A549 (cell line): ENCODE measurements at regions of chr11 and their contacts with region 1.

Region 1: GRCh38 chr11:1832211-1832919 is 2.4 kb upstream of the SYT8 start:
- DNase-seq: peak; percentile 44 to 69
- ATAC-seq: peak; percentile 41 to 83; a peak in 3 of 6 replicates
- H3K4me3 ChIP-seq: peak overlapping the region; percentile 27
- H3K27ac ChIP-seq: peak overlapping the region; percentile 73 to 89
- H3K4me1 ChIP-seq: peaks cover 66% of the 10 kb centered on the region
- CTCF ChIP-seq: peak; percentile 99
- EP300 ChIP-seq: no peak
- POLR2A ChIP-seq: no peak
- RAD21 ChIP-seq: peak; percentile 80 to 99

Region 2: GRCh38 chr11:1682225-1682905 is 150.0 kb before region 1 on chr11:
- CTCF ChIA-PET with region 1: interaction called, 28 read pairs
- POLR2A ChIA-PET with region 1: no interaction called
- DNase-seq: no peak
- ATAC-seq: no peak
- H3K4me3 ChIP-seq: no peak overlapping the region
- H3K27ac ChIP-seq: no peak overlapping the region
- H3K4me1 ChIP-seq: no peaks in the 10 kb centered on the region
- CTCF ChIP-seq: no peak
- EP300 ChIP-seq: no peak
- POLR2A ChIP-seq: no peak
- RAD21 ChIP-seq: no peak

Region 3: DNA sequence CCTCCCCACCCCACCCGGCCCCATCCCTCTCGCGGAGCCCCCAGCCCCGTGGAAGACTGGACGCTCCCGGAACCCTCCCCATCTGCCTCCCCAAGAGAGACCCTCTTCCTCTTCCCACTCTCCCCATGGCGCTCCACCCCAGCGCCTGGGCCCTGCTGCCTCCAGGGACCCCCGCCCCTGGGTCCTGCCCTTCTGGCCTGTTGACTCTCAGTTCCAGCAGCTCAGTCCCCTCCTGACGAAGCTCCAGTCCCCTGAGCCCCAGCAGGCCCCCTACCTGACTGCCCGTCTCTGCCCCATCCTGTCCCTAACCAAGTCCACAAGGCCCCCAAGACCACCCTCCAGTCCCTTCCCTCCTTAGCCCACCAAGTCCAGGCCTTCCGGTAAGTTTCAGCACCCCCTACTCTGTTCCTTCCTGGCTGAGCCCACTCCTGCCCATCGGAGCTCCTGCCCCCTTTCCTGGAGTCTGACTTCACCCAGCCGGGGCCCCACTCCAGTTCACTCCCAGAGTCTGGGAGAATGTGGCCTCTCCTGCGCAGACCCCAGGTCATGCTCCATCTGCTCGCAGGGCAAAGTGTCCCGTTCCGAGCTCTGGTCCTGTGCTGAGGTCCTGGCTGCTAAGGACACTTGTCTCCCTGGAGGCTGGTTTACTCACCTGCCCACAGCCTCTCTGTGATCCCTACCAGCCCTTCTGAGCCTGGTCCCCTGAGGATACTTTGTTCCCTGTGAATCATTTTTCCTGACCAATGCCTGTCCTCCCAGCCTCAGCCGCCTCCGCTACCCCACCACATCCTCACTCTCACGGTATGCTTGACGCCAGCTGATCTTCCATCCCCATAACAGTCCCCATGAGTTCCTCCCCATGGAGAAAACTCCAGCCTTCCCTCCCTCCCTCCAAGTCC is 82.7 kb before region 1 on chr11:
- CTCF ChIA-PET with region 1: interaction called, 12 read pairs
- POLR2A ChIA-PET with region 1: no interaction called
- DNase-seq: peak in 1 of 2 experiments; percentile 42
- ATAC-seq: peak; percentile 46 to 51
- H3K4me3 ChIP-seq: peak overlapping the region; percentile 34; the same call in 2 of the 3 replicates
- H3K27ac ChIP-seq: peak overlapping the region in 1 of 2 experiments; percentile 80; a peak in 3 of 6 replicates
- H3K4me1 ChIP-seq: peaks cover 24% of the 10 kb centered on the region; the same call in 2 of the 3 replicates
- CTCF ChIP-seq: no peak
- EP300 ChIP-seq: no peak
- POLR2A ChIP-seq: no peak
- RAD21 ChIP-seq: no peak

Region 4: GRCh38 chr11:1782831-1783724 is 49.3 kb before region 1 on chr11:
- CTCF ChIA-PET with region 1: interaction called, 13 read pairs
- POLR2A ChIA-PET with region 1: no interaction called
- DNase-seq: peak in 1 of 2 experiments; percentile 31
- ATAC-seq: peak in 1 of 2 experiments; percentile 17; a peak in 2 of 6 replicates
- H3K4me3 ChIP-seq: no peak overlapping the region
- H3K27ac ChIP-seq: peak overlapping the region; percentile 45 to 75; a peak in 5 of 6 replicates
- H3K4me1 ChIP-seq: peaks cover 28% of the 10 kb centered on the region
- CTCF ChIP-seq: no peak
- EP300 ChIP-seq: no peak
- POLR2A ChIP-seq: no peak
- RAD21 ChIP-seq: no peak

Region 5: GRCh38 chr11:1870721-1871466 is 38.5 kb after region 1 on chr11:
- CTCF ChIA-PET with region 1: interaction called, 36 read pairs
- POLR2A ChIA-PET with region 1: no interaction called
- DNase-seq: no peak
- ATAC-seq: peak in 1 of 2 experiments; percentile 34; a peak in 3 of 6 replicates
- H3K4me3 ChIP-seq: no peak overlapping the region
- H3K27ac ChIP-seq: peak overlapping the region in 1 of 2 experiments; percentile 56; a peak in 3 of 6 replicates
- H3K4me1 ChIP-seq: peaks cover 25% of the 10 kb centered on the region
- CTCF ChIP-seq: no peak
- EP300 ChIP-seq: no peak
- POLR2A ChIP-seq: no peak
- RAD21 ChIP-seq: no peak

Region 6: GRCh38 chr11:1917671-1918516 is 85.5 kb after region 1 on chr11:
- CTCF ChIA-PET with region 1: interaction called, 17 read pairs
- POLR2A ChIA-PET with region 1: no interaction called
- DNase-seq: no peak
- ATAC-seq: peak; percentile 52 to 76; a peak in 5 of 6 replicates
- H3K4me3 ChIP-seq: no peak overlapping the region
- H3K27ac ChIP-seq: no peak overlapping the region
- H3K4me1 ChIP-seq: no peaks in the 10 kb centered on the region
- CTCF ChIP-seq: no peak
- EP300 ChIP-seq: no peak
- POLR2A ChIP-seq: no peak
- RAD21 ChIP-seq: no peak